ENCODE measurements at regions of chr20 and their contacts with region 1.

Region 1: DNA sequence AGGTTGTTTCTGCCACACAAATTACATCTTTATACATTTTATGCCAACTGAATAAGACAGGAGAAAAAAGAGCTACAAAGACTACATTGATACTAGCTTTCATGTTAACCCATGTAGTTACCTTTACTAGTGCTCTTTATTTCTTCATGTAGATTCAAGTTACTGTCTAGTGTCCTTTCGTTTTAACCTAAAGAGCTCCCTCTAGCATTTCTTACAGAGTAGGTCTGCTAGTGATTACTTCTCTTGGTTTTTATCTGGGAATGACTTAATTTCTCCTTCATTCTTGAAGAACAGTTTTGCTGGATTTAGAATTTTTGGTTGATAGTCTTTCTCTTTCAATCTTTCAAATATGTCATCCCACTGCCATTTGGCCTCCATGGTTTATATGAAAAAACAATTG is 21.2 kb upstream of the NOP56 start:
- DNase-seq: no peak
- H3K4me3 ChIP-seq: no peak overlapping the region
- H3K4me3 Mint-ChIP-seq: no peak overlapping the region
- H3K27ac Mint-ChIP-seq: no peak overlapping the region
- H3K4me1 ChIP-seq: no peaks in the 10 kb centered on the region
- H3K4me1 Mint-ChIP-seq: no peaks in the 10 kb centered on the region
- H3K27me3 ChIP-seq: no peaks in the 10 kb centered on the region
- H3K27me3 Mint-ChIP-seq: peaks cover 5% of the 10 kb centered on the region
- CTCF ChIP-seq: no peak

Region 2: GRCh38 chr20:2523919-2524708 is 107.1 kb before region 1 on chr20:
- CTCF ChIA-PET with region 1: interaction called, 5 read pairs
- POLR2A ChIA-PET with region 1: no interaction called
- intact Hi-C with region 1: loop called (anchors 1 kb)
- DNase-seq: peak; percentile 85 to 94
- H3K4me3 ChIP-seq: peak overlapping the region; percentile 75
- H3K4me3 Mint-ChIP-seq: peak overlapping the region; percentile 89
- H3K27ac Mint-ChIP-seq: peak overlapping the region; percentile 65
- H3K4me1 ChIP-seq: no peaks in the 10 kb centered on the region
- H3K4me1 Mint-ChIP-seq: peaks cover 5% of the 10 kb centered on the region
- H3K27me3 ChIP-seq: no peaks in the 10 kb centered on the region; the same call in 1 of the 2 replicates
- H3K27me3 Mint-ChIP-seq: no peaks in the 10 kb centered on the region
- CTCF ChIP-seq: peak; percentile 94 to 98

Region 3: DNA sequence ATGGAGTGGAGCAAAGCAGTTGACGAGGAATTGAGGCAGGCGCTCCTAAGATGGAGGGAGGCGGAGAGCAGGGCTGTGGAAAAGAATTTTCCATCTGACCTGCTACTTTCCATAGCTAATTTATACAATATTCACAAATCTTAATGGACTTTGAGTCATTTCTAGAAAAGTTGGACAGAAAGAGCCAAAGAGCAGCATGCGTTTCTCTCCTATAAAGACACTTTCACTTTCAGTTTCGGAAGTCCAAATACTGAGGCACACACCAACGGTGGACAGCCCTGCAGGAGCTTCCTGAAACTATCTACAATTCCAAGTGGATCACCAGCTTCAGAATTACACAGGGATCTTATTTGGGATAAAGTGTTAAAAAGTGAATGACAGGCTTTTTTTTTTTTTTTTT is 1301.5 kb after region 1 on chr20:
- CTCF ChIA-PET with region 1: no interaction called
- POLR2A ChIA-PET with region 1: interaction called, 12 read pairs
- intact Hi-C with region 1: no loop called
- DNase-seq: no peak
- H3K4me3 ChIP-seq: no peak overlapping the region
- H3K4me3 Mint-ChIP-seq: no peak overlapping the region
- H3K27ac Mint-ChIP-seq: no peak overlapping the region
- H3K4me1 ChIP-seq: no peaks in the 10 kb centered on the region
- H3K4me1 Mint-ChIP-seq: no peaks in the 10 kb centered on the region
- H3K27me3 ChIP-seq: no peaks in the 10 kb centered on the region
- H3K27me3 Mint-ChIP-seq: no peaks in the 10 kb centered on the region
- CTCF ChIP-seq: no peak